Right ventricle myocardium superior (tissue), 1 donor: ENCODE measurements at regions of chr10 and their contacts with region 1.

Region 1: GRCh38 chr10:114684085-114684821 is 26.2 kb upstream of the ABLIM1 start:
- DNase-seq: peak; percentile 79
- ATAC-seq: peak; percentile 46

Region 2: GRCh38 chr10:114631666-114632417 is 52.4 kb before region 1 on chr10:
- intact Hi-C with region 1: loop called (anchors 5 kb)
- DNase-seq: peak; percentile 69
- ATAC-seq: peak; percentile 60

Region 3: DNA sequence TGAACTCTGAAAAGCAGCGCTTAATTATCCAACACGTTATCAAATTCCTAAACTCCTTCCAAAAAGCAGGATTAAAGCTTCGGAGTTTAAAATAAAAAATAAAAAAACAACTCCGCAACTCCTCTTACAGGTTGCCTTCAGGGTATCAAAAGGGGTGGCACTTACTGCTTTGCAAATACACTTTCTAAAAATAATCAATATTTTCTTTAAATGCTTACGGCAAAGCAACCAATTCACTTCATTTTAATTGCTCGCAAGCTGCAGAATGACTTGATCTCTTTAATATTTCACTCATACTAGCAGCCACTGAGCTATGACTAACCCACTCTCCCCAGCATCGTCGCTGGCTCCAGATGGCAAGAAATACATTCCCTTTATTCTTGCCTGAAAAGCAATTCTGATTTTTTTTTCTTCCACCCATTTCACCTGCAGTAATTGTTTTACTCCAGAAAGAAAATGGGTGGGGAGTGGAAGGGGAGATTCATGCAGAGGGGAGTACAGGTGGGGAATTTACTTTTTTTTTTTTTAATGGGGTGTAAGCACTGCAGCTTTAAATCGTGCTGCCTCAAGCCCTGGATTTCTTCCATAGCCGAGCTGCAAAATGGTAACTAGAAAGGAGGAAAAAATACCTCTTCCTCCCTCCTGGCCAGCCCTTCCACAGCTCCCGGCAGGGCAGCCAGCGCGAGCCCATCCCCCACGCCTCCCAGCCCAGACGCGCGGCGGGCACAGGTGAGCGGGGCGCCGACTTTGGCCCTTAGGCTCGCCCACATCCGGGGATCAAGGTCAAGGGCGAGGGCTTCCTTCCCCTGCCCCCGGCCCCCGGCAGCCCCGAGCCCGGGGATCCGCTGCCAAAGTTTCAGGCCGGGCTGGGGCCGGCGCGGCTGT is 83.1 kb after region 1 on chr10:
- intact Hi-C with region 1: no loop called
- DNase-seq: peak; percentile 64
- ATAC-seq: peak; percentile 81